ENCODE measurements at regions of chr2 and their contacts with region 1.

Region 1: DNA sequence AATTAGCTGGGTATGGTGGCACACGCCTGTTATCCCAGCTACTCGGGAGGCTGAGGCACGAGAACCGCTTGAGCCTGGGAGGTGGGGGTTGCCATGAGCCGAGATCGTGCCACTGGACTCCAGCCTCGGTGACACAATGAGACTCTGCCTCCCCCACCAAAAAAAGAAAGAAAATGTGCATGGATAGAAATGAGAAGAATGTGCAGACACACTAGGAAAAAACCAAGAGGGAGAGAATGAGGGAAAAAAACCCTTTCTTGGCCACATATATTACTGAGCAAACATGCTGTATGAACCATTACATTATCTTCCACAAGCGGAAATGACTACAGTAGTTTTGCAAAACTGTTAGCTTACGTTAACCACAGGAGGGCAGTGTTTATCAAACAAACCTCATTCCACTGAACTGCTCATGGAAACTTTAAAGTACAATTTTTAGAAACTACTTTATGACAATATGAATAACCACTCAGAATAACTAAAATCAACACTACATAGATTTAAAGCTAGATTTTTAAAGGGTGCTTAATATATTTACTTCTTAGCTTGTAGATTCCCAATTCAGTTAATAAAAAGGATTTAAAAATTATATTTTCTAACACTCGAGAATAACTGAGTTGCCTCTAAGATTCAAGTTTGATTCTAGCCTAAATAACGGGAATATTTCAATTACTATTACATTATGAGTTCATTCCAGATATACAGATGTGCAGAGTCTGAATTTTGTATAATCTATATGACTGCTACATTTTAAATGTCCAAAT is 26.4 kb downstream of the ASXL2 start:
- DNase-seq: peak in 5 of 9 experiments; percentile 10 to 86 (median 26)
- ATAC-seq: peak; percentile 95
- H3K4me3 ChIP-seq: peak overlapping the region in 1 of 2 experiments; percentile 6
- H3K4me3 Mint-ChIP-seq: peak overlapping the region; percentile 65
- H3K27ac ChIP-seq: peak overlapping the region in 1 of 2 experiments; percentile 30
- H3K27ac Mint-ChIP-seq: no peak overlapping the region
- H3K4me1 ChIP-seq: peaks cover 32% of the 10 kb centered on the region
- H3K4me1 Mint-ChIP-seq: peaks cover 50% of the 10 kb centered on the region
- H3K27me3 ChIP-seq: no peaks in the 10 kb centered on the region
- H3K27me3 Mint-ChIP-seq: no peaks in the 10 kb centered on the region
- CTCF ChIP-seq: peak; percentile 74

Region 2: GRCh38 chr2:25606892-25607291 is 245.0 kb before region 1 on chr2:
- CTCF ChIA-PET with region 1: interaction called, 11 read pairs
- POLR2A ChIA-PET with region 1: no interaction called
- intact Hi-C with region 1: loop called (anchors 1 to 5 kb)
- DNase-seq: peak in 3 of 9 experiments; percentile 8 to 60 (median 39)
- ATAC-seq: peak; percentile 55
- H3K4me3 ChIP-seq: no peak overlapping the region
- H3K4me3 Mint-ChIP-seq: no peak overlapping the region
- H3K27ac ChIP-seq: no peak overlapping the region
- H3K27ac Mint-ChIP-seq: no peak overlapping the region
- H3K4me1 ChIP-seq: no peaks in the 10 kb centered on the region
- H3K4me1 Mint-ChIP-seq: peaks cover 2% of the 10 kb centered on the region
- H3K27me3 ChIP-seq: no peaks in the 10 kb centered on the region
- H3K27me3 Mint-ChIP-seq: no peaks in the 10 kb centered on the region
- CTCF ChIP-seq: peak; percentile 72

Region 3: DNA sequence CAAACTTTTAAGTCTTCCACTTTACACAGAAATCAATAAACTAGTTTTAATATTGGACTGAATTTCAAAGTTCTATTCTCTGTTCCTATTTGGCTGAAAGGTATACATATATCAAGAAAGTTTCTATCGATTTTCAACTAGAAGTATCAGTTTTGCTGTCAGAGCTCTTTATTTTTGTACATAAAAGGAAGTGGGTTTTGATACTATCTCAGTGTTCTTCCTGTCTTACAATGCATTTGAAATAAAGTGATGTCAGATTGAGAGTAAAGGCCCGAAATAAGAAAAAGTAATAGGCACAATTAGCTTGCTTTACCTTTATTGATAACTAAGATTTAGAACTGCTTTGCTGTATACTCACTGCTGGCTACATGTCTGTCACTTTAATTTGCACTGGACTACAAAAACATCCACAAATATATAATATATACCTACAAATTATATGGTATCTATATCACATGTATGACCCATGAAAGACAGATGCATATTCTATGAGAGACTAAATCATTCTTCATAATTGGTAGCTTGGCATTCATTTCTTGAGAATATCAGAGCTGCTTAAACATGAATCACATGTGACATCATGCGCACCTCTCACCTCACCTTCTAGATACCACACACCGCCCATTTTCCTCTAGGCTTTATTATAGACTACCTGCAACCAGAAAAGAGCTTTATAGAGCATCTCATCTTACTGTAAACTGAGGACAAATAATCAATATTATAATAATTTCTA is 57.2 kb before region 1 on chr2:
- CTCF ChIA-PET with region 1: interaction called, 4 read pairs
- POLR2A ChIA-PET with region 1: interaction called, 3 read pairs
- intact Hi-C with region 1: loop called in 1 of 2 experiments (anchors 10 kb)
- DNase-seq: peak in 2 of 9 experiments; percentile 39 to 66
- ATAC-seq: peak; percentile 70
- H3K4me3 ChIP-seq: peak overlapping the region; percentile 39 to 45
- H3K4me3 Mint-ChIP-seq: peak overlapping the region; percentile 86
- H3K27ac ChIP-seq: peak overlapping the region; percentile 36 to 87
- H3K27ac Mint-ChIP-seq: peak overlapping the region; percentile 96
- H3K4me1 ChIP-seq: peaks cover 54% of the 10 kb centered on the region
- H3K4me1 Mint-ChIP-seq: peaks cover 84% of the 10 kb centered on the region
- H3K27me3 ChIP-seq: no peaks in the 10 kb centered on the region
- H3K27me3 Mint-ChIP-seq: no peaks in the 10 kb centered on the region
- CTCF ChIP-seq: no peak

Region 4: DNA sequence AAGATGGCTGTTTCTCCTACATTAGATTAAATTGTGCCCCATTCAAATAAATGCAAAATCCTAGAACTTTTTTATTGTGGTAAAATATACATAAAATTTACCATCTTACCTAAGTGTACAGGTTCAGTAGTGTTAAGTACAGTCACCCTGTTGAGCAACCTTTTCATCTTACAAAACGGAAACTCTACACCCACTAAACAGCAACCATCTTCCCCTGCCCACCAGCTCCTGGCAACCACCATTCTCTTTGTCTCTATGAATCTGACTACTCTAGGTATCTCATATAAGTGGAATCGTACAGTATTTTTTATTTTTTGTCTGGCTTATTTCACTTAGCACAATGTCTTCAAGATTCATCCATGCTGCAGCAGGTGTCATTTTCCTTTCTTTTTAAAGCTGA is 26.7 kb before region 1 on chr2:
- CTCF ChIA-PET with region 1: interaction called, 10 read pairs
- POLR2A ChIA-PET with region 1: no interaction called
- intact Hi-C with region 1: loop called in 1 of 2 experiments (anchors 2 kb)
- DNase-seq: peak in 7 of 9 experiments; percentile 14 to 74 (median 45)
- ATAC-seq: peak; percentile 83
- H3K4me3 ChIP-seq: no peak overlapping the region
- H3K4me3 Mint-ChIP-seq: peak overlapping the region; percentile 33
- H3K27ac ChIP-seq: no peak overlapping the region
- H3K27ac Mint-ChIP-seq: peak overlapping the region; percentile 74
- H3K4me1 ChIP-seq: peaks cover 36% of the 10 kb centered on the region
- H3K4me1 Mint-ChIP-seq: peaks cover 68% of the 10 kb centered on the region
- H3K27me3 ChIP-seq: no peaks in the 10 kb centered on the region
- H3K27me3 Mint-ChIP-seq: no peaks in the 10 kb centered on the region
- CTCF ChIP-seq: no peak

Region 5: DNA sequence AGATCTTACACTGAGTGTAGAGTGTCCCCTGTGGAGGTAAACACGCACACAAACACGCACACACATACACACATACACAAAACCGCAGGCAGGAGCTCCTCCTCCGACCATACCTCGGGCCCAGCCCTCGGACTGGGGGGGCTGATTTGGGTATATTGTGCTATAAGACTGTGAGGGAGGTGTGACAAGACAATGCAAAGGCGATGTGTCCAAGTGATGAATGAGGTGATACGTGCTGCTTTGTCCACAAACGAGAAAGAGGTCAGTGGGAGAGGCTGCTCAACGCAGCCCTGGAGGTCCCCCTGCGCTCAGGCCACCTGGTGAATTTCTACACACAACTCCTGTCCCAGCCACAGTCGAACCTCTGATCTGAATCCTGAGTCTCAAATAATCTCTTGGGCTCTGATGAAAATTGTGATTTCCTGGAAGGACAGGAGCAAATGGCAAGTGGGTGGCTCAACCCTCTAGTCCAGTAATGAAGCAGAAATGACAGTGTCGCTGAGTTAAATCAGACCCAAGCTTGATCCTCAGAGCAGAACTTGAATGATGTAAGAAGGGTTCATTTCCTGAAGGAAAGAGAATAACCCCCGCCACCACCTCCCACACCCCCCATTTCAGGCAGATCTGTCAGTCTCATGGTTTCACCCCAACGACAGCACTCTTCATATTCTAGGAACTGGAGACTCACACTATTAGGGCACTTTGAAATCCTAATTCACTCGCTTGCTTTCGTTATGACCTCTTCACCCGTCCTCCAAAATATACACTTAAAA is 75.2 kb after region 1 on chr2:
- CTCF ChIA-PET with region 1: no interaction called
- POLR2A ChIA-PET with region 1: no interaction called
- intact Hi-C with region 1: loop called in 1 of 2 experiments (anchors 5 kb)
- DNase-seq: no peak
- ATAC-seq: no peak
- H3K4me3 ChIP-seq: no peak overlapping the region
- H3K4me3 Mint-ChIP-seq: no peak overlapping the region
- H3K27ac ChIP-seq: no peak overlapping the region
- H3K27ac Mint-ChIP-seq: no peak overlapping the region
- H3K4me1 ChIP-seq: no peaks in the 10 kb centered on the region
- H3K4me1 Mint-ChIP-seq: no peaks in the 10 kb centered on the region
- H3K27me3 ChIP-seq: no peaks in the 10 kb centered on the region
- H3K27me3 Mint-ChIP-seq: no peaks in the 10 kb centered on the region
- CTCF ChIP-seq: no peak

Region 6: GRCh38 chr2:25951071-25951547 is 99.2 kb after region 1 on chr2:
- CTCF ChIA-PET with region 1: interaction called, 39 read pairs
- POLR2A ChIA-PET with region 1: no interaction called
- intact Hi-C with region 1: loop called (anchors 1 to 2 kb)
- DNase-seq: peak; percentile 42 to 84 (median 67)
- ATAC-seq: peak; percentile 96
- H3K4me3 ChIP-seq: no peak overlapping the region
- H3K4me3 Mint-ChIP-seq: no peak overlapping the region
- H3K27ac ChIP-seq: no peak overlapping the region
- H3K27ac Mint-ChIP-seq: no peak overlapping the region
- H3K4me1 ChIP-seq: no peaks in the 10 kb centered on the region
- H3K4me1 Mint-ChIP-seq: peaks cover 2% of the 10 kb centered on the region
- H3K27me3 ChIP-seq: no peaks in the 10 kb centered on the region
- H3K27me3 Mint-ChIP-seq: no peaks in the 10 kb centered on the region
- CTCF ChIP-seq: peak; percentile 89

Region 7: GRCh38 chr2:26144953-26145680 is 293.2 kb after region 1 on chr2:
- CTCF ChIA-PET with region 1: interaction called, 4 read pairs
- POLR2A ChIA-PET with region 1: no interaction called
- intact Hi-C with region 1: loop called (anchors 1 kb)
- DNase-seq: peak; percentile 34 to 75 (median 61)
- ATAC-seq: peak; percentile 79
- H3K4me3 ChIP-seq: no peak overlapping the region
- H3K4me3 Mint-ChIP-seq: no peak overlapping the region
- H3K27ac ChIP-seq: no peak overlapping the region
- H3K27ac Mint-ChIP-seq: no peak overlapping the region
- H3K4me1 ChIP-seq: no peaks in the 10 kb centered on the region
- H3K4me1 Mint-ChIP-seq: no peaks in the 10 kb centered on the region
- H3K27me3 ChIP-seq: peaks cover 0 to 3% of the 10 kb centered on the region in 2 experiments
- H3K27me3 Mint-ChIP-seq: peaks cover 9% of the 10 kb centered on the region
- CTCF ChIP-seq: peak; percentile 65